Upper lobe of right lung (tissue), 1 donor: ENCODE measurements at regions of chr18 and their contacts with region 1.

Region 1: GRCh38 chr18:50218432-50219197 is 23.7 kb upstream of the MYO5B start:
- DNase-seq: no peak
- ATAC-seq: peak; percentile 84
- H3K4me3 ChIP-seq: no peak overlapping the region
- H3K27ac ChIP-seq: no peak overlapping the region
- H3K4me1 ChIP-seq: no peaks in the 10 kb centered on the region
- H3K27me3 ChIP-seq: no peaks in the 10 kb centered on the region
- CTCF ChIP-seq: peak; percentile 44

Region 2: GRCh38 chr18:49988733-49989132 is 229.9 kb before region 1 on chr18:
- intact Hi-C with region 1: no loop called
- DNase-seq: no peak
- ATAC-seq: no peak
- H3K4me3 ChIP-seq: no peak overlapping the region
- H3K27ac ChIP-seq: no peak overlapping the region
- H3K4me1 ChIP-seq: no peaks in the 10 kb centered on the region
- H3K27me3 ChIP-seq: no peaks in the 10 kb centered on the region
- CTCF ChIP-seq: no peak

Region 3: DNA sequence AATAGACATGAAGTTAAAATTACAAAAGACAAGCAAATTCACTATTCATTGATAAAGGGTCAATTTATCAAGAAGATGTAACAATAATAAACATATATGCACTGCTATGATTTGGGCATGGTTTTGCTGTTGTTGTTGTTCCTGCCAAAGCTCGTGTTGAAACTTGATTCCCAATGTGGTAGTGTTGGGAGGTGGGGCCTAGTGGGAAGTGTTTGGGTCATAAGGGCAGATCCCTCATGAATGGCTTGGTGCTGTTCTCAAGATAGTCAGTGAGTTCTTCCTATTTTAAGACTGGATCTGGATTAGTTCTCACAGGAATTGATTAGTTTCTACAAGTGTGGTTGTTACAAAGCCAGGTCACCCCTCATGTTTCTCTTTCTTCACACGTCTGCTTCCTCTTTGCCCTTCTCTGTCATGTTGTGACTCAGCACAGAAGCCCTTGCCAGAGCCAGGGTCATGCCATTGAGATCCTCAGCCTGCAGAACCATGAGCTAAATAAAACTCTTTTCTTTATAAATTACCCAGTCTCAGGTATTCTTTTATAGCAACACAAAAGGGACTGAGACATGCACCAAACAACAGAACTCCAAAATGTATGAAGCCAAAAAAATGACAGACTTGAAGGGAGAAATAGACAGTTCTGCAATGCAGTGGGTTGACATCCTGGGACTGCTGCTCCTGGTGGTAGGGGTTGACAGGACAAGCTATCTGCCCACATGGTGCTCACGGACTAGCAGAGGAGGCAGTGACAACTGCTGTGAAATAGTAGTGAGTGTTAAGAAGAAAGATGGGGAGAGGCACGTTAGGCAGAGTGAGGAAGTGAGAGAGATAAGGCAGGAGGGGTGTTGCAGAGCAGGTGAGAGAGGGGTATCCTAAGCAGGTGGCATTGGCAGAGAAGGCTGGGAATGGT is 137.7 kb after region 1 on chr18:
- intact Hi-C with region 1: loop called (anchors 10 kb)
- DNase-seq: no peak
- ATAC-seq: peak; percentile 78
- H3K4me3 ChIP-seq: no peak overlapping the region
- H3K27ac ChIP-seq: no peak overlapping the region
- H3K4me1 ChIP-seq: no peaks in the 10 kb centered on the region
- H3K27me3 ChIP-seq: peaks cover 56% of the 10 kb centered on the region
- CTCF ChIP-seq: peak; percentile 14

Region 4: GRCh38 chr18:50424877-50425690 is 206.5 kb after region 1 on chr18:
- intact Hi-C with region 1: no loop called
- DNase-seq: no peak
- ATAC-seq: peak; percentile 65
- H3K4me3 ChIP-seq: no peak overlapping the region
- H3K27ac ChIP-seq: no peak overlapping the region
- H3K4me1 ChIP-seq: no peaks in the 10 kb centered on the region
- H3K27me3 ChIP-seq: no peaks in the 10 kb centered on the region
- CTCF ChIP-seq: no peak